GM23248 (cell line): ENCODE measurements at regions of chr12 and their contacts with region 1.

Region 1: GRCh38 chr12:27635349-27635972 is 60.8 kb upstream of the REP15 start:
- DNase-seq: peak; percentile 79
- H3K4me3 ChIP-seq: no peak overlapping the region
- H3K27ac ChIP-seq: no peak overlapping the region
- H3K4me1 ChIP-seq: peaks cover 23% of the 10 kb centered on the region
- H3K27me3 ChIP-seq: no peaks in the 10 kb centered on the region

Region 2: DNA sequence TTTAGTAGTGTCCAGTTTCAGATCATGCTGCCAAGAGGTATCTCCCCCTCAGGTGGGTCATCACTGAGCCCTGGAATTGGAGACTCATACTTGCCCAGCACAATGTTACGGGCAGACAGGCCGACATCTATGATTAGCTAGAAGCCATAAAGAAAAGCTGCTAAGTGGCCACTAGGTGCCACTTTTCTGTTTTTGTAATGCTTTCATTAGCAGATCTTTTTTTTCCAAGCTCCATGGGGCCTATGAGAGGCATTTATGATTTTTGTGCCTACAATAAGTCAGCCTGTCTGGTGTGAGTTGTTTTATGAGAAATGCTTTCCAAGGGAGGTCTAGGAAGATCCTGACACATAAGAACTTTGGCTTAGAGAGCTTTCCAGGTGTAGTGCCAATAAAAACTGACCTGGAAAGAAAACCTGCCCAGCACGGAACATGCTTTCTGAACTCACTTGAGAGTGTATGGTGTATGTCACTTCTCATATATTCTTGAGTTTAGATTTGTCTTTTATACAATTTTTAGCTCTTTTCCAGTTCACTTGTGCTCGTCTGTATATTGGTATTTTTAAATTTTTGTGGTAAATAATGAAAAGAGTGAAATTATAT is 210.7 kb before region 1 on chr12:
- in situ Hi-C with region 1: loop called (anchors 10 kb)
- DNase-seq: peak; percentile 81
- H3K4me3 ChIP-seq: no peak overlapping the region
- H3K27ac ChIP-seq: no peak overlapping the region
- H3K4me1 ChIP-seq: no peaks in the 10 kb centered on the region
- H3K27me3 ChIP-seq: no peaks in the 10 kb centered on the region

Region 3: DNA sequence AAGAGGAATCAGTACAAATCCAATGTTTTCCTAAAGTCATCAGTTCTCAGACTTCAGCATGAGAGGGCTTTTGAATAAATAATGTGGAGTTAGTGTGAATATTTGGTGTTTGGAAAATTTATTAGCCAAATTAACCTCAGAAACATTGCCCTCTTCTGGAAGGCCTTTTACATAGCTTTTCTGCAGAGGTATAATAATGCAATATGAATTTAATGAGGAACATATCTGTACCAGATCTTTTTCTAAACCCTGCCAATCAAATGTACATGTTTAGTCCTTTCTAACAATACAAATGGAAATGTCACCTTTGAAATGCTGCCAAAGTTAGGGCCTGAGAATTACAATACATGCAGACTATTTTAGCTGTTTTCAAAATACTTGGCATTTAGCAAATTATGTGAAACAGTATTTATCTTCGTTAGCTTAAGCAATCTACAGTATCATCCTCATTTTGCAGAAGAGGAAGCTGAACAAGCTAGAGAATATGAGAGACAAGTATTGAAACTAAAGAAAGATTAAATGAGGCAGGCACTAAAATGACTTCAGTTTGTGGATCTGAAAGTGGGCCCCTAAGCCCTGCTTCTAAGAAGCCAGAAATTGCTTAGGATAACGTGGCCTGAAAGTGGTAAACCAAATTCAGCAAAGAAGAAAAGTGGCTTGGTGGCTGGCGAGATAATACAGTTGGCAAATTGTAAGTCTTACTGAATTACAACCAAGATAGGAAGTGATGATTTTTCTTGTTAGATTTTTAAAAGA is 205.0 kb after region 1 on chr12:
- in situ Hi-C with region 1: no loop called
- DNase-seq: peak; percentile 44
- H3K4me3 ChIP-seq: no peak overlapping the region
- H3K27ac ChIP-seq: no peak overlapping the region
- H3K4me1 ChIP-seq: peaks cover 8% of the 10 kb centered on the region
- H3K27me3 ChIP-seq: no peaks in the 10 kb centered on the region